Activated T-helper 2 cell treated with anti-CD3 and anti-CD28 coated beads, Interferon-gamma antibody, Interleukin-2, Interleukin-4, amounts not matched to agents 10 μg/mL and 5 μg/mL and 100 μg/mL, durations not matched to agents 14 hours and 24 hours and 36 hours (primary cell): ENCODE measurements at regions of chr13 and their contacts with region 1.

Region 1: DNA sequence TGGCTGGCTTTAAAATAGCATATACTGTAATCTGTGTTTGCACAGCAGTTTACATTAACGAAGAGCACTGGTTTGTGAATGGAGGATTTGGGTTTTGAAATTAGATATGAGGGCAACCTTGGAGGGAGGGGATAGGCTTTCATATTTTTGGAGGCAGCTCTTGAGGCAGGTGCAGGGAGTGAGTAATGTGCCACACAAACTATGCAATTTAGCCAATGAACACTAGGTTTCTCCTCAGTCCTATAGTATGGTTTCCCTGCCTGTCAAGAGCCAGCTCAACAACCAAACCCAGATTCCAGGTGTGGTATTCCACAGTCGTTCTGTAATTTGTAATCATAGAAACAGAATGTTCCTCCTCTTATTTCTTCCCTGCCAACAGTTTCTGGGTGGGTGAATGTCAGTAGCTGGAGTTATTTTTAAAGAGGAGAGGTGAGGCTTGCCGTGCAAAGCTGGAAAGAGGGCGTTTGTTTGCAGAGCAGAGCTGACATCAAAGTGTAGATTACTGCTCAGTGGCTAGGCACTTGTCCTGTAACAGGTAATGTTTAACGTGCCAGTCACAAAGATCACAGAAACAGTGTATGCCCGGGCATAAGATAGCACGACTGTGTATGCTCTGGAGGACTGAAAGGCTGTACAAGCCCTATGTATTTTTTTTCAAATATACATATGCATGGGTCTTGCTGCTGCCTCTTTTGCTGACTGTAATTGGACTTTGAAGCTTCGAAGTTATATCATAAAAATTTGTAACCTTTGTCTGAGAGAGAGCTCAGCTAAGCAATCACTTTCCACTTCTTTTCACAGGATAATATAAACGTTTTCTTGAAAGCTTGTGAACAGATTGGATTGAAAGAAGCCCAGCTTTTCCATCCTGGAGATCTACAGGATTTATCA is 124.2 kb downstream of the LMO7 start:
- DNase-seq: no peak
- H3K4me3 Mint-ChIP-seq: peak overlapping the region; percentile 71
- H3K27ac Mint-ChIP-seq: peak overlapping the region; percentile 63
- H3K4me1 Mint-ChIP-seq: peaks cover 65% of the 10 kb centered on the region
- H3K27me3 Mint-ChIP-seq: no peaks in the 10 kb centered on the region

Region 2: DNA sequence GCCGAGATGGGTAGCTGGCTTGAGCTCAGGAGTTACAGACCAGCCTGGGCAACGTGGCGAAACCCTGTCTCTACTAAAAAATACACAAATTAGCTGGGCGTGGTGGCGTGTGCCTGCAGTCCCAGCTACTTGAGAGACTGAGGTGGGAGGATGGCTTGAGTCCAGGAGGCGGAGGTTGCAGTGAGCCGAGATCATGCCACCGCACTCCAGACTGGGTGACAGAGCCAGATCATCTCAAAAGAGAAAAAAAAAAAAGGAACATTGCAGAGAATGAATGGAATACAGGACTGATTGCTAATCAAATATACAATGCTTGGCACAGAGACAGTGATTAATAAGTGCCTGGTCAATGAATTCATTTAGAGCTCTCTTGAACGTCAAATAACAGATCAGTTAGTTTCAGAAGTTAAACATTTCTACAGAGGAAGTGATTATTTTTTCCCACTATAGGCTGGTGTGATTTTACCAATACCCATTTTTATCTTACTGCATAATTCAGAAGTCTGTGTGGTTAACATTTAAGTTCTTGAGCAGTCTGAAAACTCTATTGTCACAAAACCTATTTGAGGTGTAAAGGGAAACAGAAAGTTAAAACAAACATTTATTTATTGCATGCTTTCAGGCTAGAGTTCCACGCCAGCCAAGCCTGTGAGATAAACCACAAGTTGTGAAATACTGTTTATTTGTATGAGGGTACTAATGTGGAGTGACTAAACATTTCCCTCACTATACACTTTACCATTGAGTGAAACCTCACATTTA is 270.7 kb before region 1 on chr13:
- intact Hi-C with region 1: loop called (anchors 5 kb)
- DNase-seq: no peak
- H3K4me3 Mint-ChIP-seq: no peak overlapping the region
- H3K27ac Mint-ChIP-seq: peak overlapping the region; percentile 34
- H3K4me1 Mint-ChIP-seq: peaks cover 40% of the 10 kb centered on the region
- H3K27me3 Mint-ChIP-seq: peaks cover 18% of the 10 kb centered on the region

Region 3: GRCh38 chr13:75715601-75716523 is 44.5 kb before region 1 on chr13:
- intact Hi-C with region 1: loop called (anchors 1 kb)
- DNase-seq: no peak
- H3K4me3 Mint-ChIP-seq: no peak overlapping the region
- H3K27ac Mint-ChIP-seq: no peak overlapping the region
- H3K4me1 Mint-ChIP-seq: peaks cover 8% of the 10 kb centered on the region
- H3K27me3 Mint-ChIP-seq: no peaks in the 10 kb centered on the region

Region 4: DNA sequence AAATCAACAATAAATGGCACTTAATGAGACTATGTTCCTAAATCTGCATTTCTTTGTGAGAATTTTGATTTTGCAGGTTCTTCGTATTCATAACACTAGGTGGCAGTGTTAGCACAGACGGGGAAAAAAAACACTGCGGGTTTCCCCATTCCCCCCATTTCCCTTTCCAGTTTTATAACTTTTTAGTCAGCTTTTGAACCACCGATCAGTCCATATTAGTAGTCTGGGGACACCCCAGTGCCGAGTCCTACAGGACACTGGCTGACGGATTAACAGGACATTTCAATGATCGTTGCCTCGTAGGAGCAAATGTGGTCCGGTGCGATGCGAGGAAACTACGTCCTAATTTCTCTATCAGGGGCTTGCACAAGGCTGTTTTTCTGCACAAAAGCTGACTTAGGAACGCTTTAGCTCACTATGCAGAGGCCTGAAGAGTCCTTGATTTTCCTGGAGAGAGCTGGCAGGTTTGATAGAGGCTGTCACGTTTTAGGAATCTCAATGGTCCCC is 110.1 kb after region 1 on chr13:
- intact Hi-C with region 1: loop called (anchors 2 kb)
- DNase-seq: peak; percentile 10
- H3K4me3 Mint-ChIP-seq: peak overlapping the region; percentile 63
- H3K27ac Mint-ChIP-seq: no peak overlapping the region
- H3K4me1 Mint-ChIP-seq: peaks cover 30% of the 10 kb centered on the region
- H3K27me3 Mint-ChIP-seq: peaks cover 13% of the 10 kb centered on the region

Region 5: GRCh38 chr13:75902166-75903104 is 142.1 kb after region 1 on chr13:
- intact Hi-C with region 1: no loop called
- DNase-seq: no peak
- H3K4me3 Mint-ChIP-seq: no peak overlapping the region
- H3K27ac Mint-ChIP-seq: no peak overlapping the region
- H3K4me1 Mint-ChIP-seq: no peaks in the 10 kb centered on the region
- H3K27me3 Mint-ChIP-seq: peaks cover 9% of the 10 kb centered on the region

Region 6: DNA sequence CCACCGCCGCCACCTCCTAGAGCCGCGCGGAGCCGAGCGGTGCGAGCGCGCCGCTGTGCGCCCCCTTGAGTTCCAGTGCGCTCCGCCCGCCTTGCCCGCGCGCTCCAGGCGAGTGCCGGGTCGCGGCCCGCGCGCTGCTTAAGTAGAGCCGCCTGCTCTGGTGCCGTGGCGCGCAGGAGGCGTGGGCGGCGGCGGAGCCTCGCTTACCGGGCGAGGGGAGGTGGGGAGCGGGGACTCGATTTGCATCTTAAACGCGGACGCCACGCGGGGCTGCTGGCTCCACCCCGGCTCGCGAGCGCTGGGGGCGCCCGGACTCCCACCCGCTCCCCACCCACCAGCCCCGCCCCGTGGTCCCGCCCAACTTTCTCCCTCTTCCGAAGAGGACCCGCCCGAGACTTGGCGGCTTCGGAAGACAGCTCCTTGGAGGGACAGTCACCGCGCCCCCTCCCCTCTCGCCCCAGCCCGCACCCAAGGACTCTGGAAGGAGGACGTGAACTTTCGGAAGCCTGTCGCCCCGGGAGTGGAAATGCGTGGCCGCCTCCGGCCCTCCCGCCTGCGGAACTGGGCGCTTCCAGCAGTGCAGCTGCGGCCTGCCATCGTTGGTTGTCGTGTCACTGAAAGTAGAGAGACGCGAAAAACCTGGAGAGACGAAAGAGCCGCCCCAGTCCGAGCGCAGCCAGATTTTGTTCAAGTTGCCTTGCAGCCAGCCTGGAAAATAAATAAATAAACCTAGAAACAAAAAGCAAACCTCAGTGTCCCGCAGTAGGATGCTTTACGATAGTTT is 1126.1 kb after region 1 on chr13 and contains the start of gene KCTD12:
- intact Hi-C with region 1: loop called (anchors 5 kb)
- DNase-seq: peak; percentile 75
- H3K4me3 Mint-ChIP-seq: peak within 1 kb of the TSS; percentile 88
- H3K27ac Mint-ChIP-seq: peak within 1 kb of the TSS; percentile 75
- H3K4me1 Mint-ChIP-seq: peaks cover 32% of the 10 kb centered on the region
- H3K27me3 Mint-ChIP-seq: peaks cover 25% of the 10 kb centered on the region
- total RNA-seq, gene KCTD12: 12.7 and 13.2 TPM in 2 replicates